HepG2 (cell line): ENCODE measurements at regions of chr16 and their contacts with region 1.

Region 1: GRCh38 chr16:47136101-47136820 is 7.5 kb downstream of the NETO2 start:
- DNase-seq: peak; percentile 13
- ATAC-seq: no peak
- H3K4me3 ChIP-seq: no peak overlapping the region
- H3K27ac ChIP-seq: no peak overlapping the region
- H3K4me1 ChIP-seq: 0 out of 2 replicates have a peak, but pooled peaks cover under 1% of the 10 kb centered on the region
- H3K27me3 ChIP-seq: no peaks in the 10 kb centered on the region
- CTCF ChIP-seq: no peak
- EP300 ChIP-seq: no peak
- POLR2A ChIP-seq: no peak
- RAD21 ChIP-seq: no peak

Region 2: DNA sequence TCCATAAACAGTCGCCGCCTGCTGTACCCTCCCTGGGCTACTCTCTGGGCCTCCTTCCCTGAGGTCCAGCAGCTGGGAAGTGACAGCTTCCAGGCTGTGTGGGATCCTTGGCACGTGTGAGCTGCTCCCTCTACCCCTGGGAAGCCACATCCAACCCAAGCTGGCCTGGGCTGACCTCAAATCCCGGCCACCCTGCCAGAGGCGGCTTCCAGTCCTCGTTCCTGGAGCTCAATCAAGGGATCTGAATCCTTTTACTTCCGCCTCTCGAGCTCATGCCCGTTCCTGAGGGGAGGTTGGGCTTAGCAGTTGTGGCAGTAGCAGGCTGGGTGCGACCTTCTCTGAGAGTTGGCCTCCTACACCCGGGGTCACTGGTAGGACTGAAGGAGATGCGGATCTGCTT is 75.1 kb before region 1 on chr16:
- CTCF ChIA-PET with region 1: no interaction called
- POLR2A ChIA-PET with region 1: no interaction called
- in situ Hi-C with region 1: no loop called
- intact Hi-C with region 1: no loop called
- DNase-seq: no peak
- ATAC-seq: no peak
- H3K4me3 ChIP-seq: no peak overlapping the region
- H3K27ac ChIP-seq: no peak overlapping the region
- H3K4me1 ChIP-seq: peaks cover 56% of the 10 kb centered on the region
- H3K27me3 ChIP-seq: peaks cover 0 to 4% of the 10 kb centered on the region in 2 experiments; a peak in 2 of 5 replicates
- CTCF ChIP-seq: no peak
- EP300 ChIP-seq: no peak
- POLR2A ChIP-seq: no peak
- RAD21 ChIP-seq: no peak

Region 3: DNA sequence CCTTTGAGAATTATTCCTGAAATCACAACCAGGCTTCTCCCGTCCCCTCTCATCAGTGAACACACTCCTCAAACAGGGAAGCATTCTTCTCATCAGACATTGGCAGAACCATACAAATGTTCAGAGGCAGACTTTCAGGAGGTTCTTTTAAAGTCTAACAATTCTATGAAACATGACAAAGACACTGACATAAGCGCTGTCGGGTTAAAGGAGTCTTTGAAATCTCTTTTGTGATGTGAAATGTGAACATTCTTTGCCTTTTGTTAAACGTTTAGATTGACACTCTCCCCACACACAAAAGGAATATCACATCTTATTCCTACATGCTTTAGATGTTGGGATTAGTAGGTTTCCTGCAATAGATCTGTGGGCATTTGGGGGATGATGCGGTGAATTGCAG is 56.4 kb before region 1 on chr16:
- CTCF ChIA-PET with region 1: no interaction called
- POLR2A ChIA-PET with region 1: no interaction called
- in situ Hi-C with region 1: no loop called
- intact Hi-C with region 1: no loop called
- DNase-seq: no peak
- ATAC-seq: no peak
- H3K4me3 ChIP-seq: no peak overlapping the region
- H3K27ac ChIP-seq: no peak overlapping the region
- H3K4me1 ChIP-seq: no peaks in the 10 kb centered on the region
- H3K27me3 ChIP-seq: peaks cover 0 to 9% of the 10 kb centered on the region in 2 experiments; a peak in 2 of 5 replicates
- CTCF ChIP-seq: no peak
- EP300 ChIP-seq: no peak
- POLR2A ChIP-seq: no peak
- RAD21 ChIP-seq: no peak

Region 4: DNA sequence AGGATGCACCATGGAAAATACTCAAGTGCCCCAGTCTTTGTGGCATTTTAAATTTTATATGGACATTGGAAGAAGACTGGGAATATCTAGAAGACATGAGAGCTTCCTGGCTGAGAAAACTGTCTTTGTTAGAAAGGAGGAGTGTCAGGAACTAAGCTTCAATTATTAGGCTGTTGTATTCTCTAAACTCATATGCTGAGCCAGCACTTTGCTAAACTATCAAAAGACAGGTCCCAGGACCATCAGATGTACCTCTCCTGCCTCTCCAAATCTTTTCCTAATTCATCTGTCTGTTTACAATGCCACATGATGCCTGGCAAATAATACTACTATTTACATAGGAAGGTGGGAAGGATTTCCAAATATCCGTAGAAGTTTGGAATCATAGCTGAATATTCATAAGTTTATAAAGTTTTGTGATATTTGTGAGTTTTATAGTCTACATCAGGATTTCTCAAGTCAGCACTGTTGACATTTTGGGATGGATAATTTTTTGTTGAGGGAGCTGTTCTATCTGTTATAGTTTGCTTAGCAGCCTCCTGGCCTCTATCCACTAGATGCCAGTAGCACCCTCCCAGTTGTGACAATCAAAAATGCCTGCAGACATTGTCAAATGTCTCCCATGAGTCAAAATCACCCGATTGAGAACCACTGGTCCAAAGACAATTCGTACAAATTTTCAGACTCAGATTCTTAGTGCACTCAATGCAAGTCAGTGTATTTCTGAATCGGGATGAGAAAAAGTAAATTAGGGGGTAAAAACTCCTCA is 68.7 kb after region 1 on chr16:
- CTCF ChIA-PET with region 1: no interaction called
- POLR2A ChIA-PET with region 1: no interaction called
- in situ Hi-C with region 1: no loop called
- intact Hi-C with region 1: no loop called
- DNase-seq: no peak
- ATAC-seq: no peak
- H3K4me3 ChIP-seq: no peak overlapping the region
- H3K27ac ChIP-seq: no peak overlapping the region
- H3K4me1 ChIP-seq: no peaks in the 10 kb centered on the region
- H3K27me3 ChIP-seq: no peaks in the 10 kb centered on the region
- CTCF ChIP-seq: peak; percentile 25; the same call in 1 of the 2 replicates
- EP300 ChIP-seq: no peak
- POLR2A ChIP-seq: no peak
- RAD21 ChIP-seq: no peak

Region 5: DNA sequence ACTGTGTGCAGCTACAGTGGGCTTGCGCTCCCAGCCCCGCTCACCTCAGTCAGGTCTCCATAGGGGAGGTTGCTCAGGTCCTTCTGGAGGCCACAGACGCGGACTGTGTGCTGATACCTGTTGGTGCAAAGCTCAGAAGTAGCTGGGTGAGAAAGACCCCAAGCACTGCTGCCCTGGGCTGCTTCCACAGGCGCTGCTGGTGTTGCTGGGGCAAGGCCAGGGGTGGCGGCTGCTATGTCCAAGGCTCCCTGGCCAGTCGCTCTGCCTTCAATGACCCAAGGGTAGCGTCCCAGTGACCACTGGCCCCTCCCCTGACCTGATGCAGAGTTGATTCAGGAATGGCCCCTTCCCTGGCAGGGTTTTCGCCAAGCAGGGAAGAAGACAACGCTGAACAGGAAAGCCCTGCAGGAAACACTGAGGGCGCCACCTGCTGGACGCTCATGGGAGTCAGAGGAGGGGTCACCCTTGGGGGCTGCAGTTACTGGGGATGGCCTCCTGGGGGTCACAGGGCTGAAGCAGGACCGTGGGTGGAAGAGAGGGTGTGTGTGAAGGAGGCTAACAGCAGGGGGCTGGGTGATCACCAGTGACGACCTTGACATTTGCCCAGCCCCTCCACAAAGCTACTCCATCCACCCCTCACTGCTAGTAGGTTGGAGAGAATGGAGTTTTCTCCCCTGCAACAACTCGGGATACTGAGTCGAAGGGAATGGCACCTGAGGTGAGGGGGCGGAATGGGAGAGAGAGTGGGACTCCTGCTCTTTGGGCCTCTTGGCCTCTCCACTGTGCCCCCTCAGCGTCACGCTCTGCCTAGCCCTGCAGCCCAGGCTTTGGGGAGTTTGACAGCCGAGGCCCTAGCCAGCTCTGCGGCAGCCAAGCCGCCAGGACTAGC is 981.2 kb after region 1 on chr16:
- CTCF ChIA-PET with region 1: interaction called, 24 read pairs
- POLR2A ChIA-PET with region 1: no interaction called
- in situ Hi-C with region 1: loop called (anchors 5 kb)
- intact Hi-C with region 1: loop called (anchors 1 kb)
- DNase-seq: peak; percentile 81
- ATAC-seq: peak; percentile 95
- H3K4me3 ChIP-seq: no peak overlapping the region
- H3K27ac ChIP-seq: no peak overlapping the region
- H3K4me1 ChIP-seq: peaks cover 9% of the 10 kb centered on the region
- H3K27me3 ChIP-seq: peaks cover 0 to 36% of the 10 kb centered on the region in 2 experiments; a peak in 3 of 5 replicates
- CTCF ChIP-seq: peak; percentile 90
- EP300 ChIP-seq: no peak
- POLR2A ChIP-seq: no peak
- RAD21 ChIP-seq: peak; percentile 90